B cell (primary cell): ENCODE measurements at regions of chr3 and their contacts with region 1.

Region 1: DNA sequence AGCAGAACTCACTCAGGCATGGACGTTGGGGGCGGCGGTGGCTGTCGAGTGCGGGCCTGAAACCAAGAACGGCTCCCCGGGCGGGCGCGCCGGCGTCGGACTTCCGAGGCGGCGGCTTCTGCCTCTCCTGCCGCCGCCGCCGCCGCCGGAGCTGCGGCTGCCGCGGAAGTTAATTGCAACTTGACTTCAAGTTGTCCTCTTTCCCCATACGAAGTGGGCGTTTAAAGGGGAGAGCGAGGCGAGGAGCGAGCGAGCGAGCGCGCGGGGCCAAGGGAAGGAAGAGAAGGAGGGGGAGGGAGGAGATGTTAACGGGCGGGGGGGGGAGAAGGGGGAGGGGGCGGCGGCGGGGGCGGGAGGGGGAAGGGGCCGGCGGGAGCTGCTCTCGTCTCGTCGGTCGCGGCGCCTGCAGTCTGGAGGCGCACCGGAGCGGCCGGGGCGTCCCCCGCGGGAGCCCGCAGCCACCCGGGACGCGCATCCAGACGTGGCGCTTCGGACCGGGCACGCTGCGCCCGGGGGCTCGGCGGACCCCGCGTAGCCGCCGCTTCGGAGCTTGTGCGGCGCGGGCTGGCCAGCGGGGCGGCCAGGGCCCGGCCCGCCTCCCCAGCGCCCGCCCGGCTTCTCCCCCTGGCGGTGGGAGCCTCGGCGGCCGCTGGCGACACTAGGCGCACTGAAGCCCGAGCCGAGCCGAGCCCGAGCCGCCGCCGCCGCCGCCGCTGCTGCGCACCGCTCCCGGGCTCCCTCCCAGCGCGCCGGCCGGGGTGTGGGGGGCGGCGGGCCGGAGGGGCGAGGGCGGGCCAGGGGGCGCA is 19.7 kb upstream of the SATB1 start:
- DNase-seq: peak; percentile 88
- ATAC-seq: peak; percentile 78
- H3K4me3 ChIP-seq: peak overlapping the region; percentile 38 to 91 (median 88)
- H3K4me3 Mint-ChIP-seq: peak overlapping the region; percentile 95
- H3K27ac ChIP-seq: peak overlapping the region; percentile 85 to 89
- H3K27ac Mint-ChIP-seq: peak overlapping the region; percentile 86
- H3K4me1 ChIP-seq: peaks cover 38 to 46% of the 10 kb centered on the region in 2 donors
- H3K4me1 Mint-ChIP-seq: peaks cover 51% of the 10 kb centered on the region
- H3K27me3 ChIP-seq: peaks cover 0 to 3% (median 0%) of the 10 kb centered on the region in 4 experiments
- H3K27me3 Mint-ChIP-seq: peaks cover 8% of the 10 kb centered on the region
- CTCF ChIP-seq: no peak

Region 2: DNA sequence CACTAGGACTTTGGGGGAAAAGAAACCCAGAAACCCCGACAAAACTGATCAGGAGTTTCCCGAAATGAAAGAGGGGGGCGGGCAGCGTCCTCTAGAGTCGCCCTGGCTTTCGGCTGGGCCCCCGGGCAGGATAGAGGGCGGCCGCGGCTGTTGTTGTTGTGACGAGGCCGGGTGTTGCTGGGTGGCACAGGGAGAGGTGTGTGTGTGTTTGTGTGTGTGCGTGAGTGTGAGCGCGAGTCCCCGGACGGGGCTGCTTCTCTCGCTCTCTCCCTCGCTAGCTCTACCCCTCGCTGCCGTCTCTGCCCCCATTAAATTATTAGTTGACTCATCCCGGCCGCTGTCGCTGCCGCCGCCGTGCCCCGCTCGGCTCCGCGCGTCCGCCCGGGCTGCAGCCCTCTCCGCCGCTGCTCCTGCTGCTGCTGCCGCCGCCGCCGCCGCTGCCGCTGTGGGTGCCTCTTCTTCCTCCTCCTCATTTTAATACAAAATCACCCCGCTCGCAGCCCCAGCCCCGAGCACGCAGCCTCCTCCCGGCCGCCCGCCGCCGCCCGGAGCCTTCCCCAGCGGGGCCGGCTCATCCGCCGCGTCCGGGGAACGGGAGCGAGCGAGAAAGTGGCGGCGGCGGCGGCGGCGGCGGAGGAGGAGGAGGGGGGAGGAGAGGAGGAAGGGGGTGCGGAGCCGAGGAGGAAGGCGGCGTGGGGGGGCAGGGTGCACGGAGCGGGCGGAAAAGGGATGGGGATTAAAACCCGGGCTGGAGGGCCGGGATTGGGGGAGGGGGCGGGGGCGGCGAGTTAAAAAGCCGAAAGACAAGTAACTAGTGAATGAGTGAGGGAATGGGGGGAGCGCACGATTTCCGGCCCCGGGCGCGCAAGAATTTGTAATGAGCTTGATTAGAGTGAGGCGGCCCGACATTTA is 19.8 kb before region 1 on chr3 and contains the start of gene SATB1:
- CTCF ChIA-PET with region 1: interaction called, 5 read pairs
- POLR2A ChIA-PET with region 1: interaction called, 8 read pairs
- intact Hi-C with region 1: loop called (anchors 1 kb)
- DNase-seq: peak; percentile 80
- ATAC-seq: peak; percentile 53
- H3K4me3 ChIP-seq: peak within 1 kb of the TSS; percentile 68 to 93 (median 86)
- H3K4me3 Mint-ChIP-seq: peak within 1 kb of the TSS; percentile 87
- H3K27ac ChIP-seq: peak within 1 kb of the TSS; percentile 78 to 86
- H3K27ac Mint-ChIP-seq: peak within 1 kb of the TSS; percentile 94
- H3K4me1 ChIP-seq: peaks cover 21 to 22% of the 10 kb centered on the region in 2 donors
- H3K4me1 Mint-ChIP-seq: peaks cover 35% of the 10 kb centered on the region
- H3K27me3 ChIP-seq: no peaks in the 10 kb centered on the region
- H3K27me3 Mint-ChIP-seq: no peaks in the 10 kb centered on the region
- CTCF ChIP-seq: no peak
- total RNA-seq, gene SATB1: 56.1 and 66.5 TPM in 2 replicates

Region 3: DNA sequence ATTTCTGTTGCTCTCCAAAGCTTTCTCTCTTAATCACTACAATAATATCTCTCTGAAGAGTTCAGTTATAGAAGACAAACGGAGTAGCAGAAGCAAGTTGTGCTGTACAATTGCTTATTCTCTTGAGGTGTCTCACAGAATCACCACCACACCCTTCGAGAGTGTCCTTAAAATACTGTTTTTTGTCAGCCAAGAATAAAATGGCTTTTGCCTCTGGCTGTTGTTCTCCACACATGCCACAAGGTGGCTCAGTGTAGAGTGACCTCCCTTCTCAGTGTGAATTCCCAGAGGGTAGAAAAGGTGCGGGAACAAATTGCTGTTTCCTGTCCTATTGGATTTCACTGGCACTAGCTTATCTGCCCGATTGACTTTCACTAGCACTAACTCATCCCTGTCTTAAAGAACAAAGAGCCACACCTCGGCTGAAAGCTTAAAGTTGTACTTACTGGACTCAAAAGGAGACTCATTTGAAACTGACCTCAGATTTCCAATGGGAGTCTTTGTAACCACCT is 114.6 kb after region 1 on chr3:
- CTCF ChIA-PET with region 1: interaction called, 15 read pairs
- POLR2A ChIA-PET with region 1: no interaction called
- intact Hi-C with region 1: no loop called
- DNase-seq: peak; percentile 63
- ATAC-seq: peak; percentile 67
- H3K4me3 ChIP-seq: no peak overlapping the region
- H3K4me3 Mint-ChIP-seq: no peak overlapping the region
- H3K27ac ChIP-seq: no peak overlapping the region
- H3K27ac Mint-ChIP-seq: no peak overlapping the region
- H3K4me1 ChIP-seq: peaks cover 6 to 10% of the 10 kb centered on the region in 2 donors
- H3K4me1 Mint-ChIP-seq: peaks cover 17% of the 10 kb centered on the region
- H3K27me3 ChIP-seq: no peaks in the 10 kb centered on the region
- H3K27me3 Mint-ChIP-seq: peaks cover 5% of the 10 kb centered on the region
- CTCF ChIP-seq: peak; percentile 83

Region 4: GRCh38 chr3:18758047-18758704 is 313.4 kb after region 1 on chr3:
- CTCF ChIA-PET with region 1: interaction called, 6 read pairs
- POLR2A ChIA-PET with region 1: no interaction called
- intact Hi-C with region 1: loop called (anchors 5 kb)
- DNase-seq: peak; percentile 84
- ATAC-seq: peak; percentile 88
- H3K4me3 ChIP-seq: no peak overlapping the region
- H3K4me3 Mint-ChIP-seq: no peak overlapping the region
- H3K27ac ChIP-seq: no peak overlapping the region
- H3K27ac Mint-ChIP-seq: no peak overlapping the region
- H3K4me1 ChIP-seq: no peaks in the 10 kb centered on the region
- H3K4me1 Mint-ChIP-seq: no peaks in the 10 kb centered on the region
- H3K27me3 ChIP-seq: no peaks in the 10 kb centered on the region
- H3K27me3 Mint-ChIP-seq: no peaks in the 10 kb centered on the region
- CTCF ChIP-seq: peak; percentile 87